Left cardiac atrium (tissue), 4 donors: ENCODE measurements at regions of chr11 and their contacts with region 1.

Region 1: DNA sequence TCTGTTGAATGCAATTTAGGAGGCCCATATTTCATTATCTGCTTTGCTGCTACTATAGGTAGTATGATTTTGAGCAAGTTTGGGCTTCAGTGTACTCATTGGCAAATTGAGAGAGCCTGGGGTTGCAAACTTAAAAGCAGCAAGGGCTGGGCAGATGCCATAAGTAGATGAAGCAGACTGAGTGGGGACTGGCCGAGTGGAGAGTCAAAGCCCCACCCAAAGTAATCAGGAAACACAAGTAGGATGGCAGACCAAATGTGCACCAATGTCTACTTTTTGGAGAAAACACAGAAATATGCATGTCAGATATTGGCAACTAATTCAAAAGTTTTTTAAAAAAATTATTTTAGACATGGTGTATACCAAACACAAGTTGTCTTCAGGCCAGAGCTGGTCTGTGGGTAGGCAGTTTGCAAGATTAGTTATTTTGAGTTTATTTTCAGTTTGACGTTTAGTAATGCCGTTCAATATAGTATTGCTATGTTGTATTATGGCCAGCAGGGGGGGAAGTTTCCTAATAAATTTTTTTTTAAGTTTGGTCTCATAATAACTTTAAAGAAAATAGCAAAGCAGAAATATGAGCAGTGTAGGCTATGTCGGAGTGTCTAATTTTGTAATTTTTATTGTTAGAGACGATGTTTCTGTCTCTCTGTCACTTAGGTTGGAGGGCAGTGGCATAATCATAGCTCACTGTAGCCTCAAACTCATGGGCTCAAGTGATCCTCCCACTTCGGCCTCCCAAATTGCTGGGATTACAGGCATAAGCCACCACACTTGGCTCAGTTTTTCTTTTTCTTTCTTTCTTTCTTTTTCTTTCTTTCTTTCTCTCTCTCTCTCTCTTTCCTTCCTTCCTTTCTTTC is 105.1 kb downstream of the HIPK3 start:
- DNase-seq: no peak
- ATAC-seq: peak; percentile 44 to 60

Region 2: GRCh38 chr11:33135768-33136443 is 226.4 kb before region 1 on chr11:
- intact Hi-C with region 1: no loop called
- DNase-seq: no peak
- ATAC-seq: no peak

Region 3: DNA sequence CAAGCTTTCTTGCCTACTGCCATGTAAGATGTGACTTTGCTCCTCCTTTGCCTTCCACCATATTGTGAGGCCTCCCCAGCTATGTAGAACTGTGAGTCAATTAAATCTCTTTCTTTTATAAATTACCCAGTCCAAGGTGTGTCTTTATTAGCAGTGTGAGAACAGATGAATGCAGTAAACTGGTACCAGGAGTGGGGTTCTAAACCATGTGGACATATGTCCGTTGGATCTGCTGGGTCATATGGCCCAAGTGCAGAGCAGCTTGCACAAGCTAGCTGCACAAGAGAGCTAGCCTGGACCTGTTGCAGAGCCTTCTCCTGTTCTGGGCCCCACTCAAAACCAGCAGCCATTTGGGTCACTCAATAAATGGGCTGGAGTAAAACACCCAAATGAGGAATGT is 72.0 kb after region 1 on chr11:
- intact Hi-C with region 1: no loop called
- DNase-seq: no peak
- ATAC-seq: no peak

Region 4: DNA sequence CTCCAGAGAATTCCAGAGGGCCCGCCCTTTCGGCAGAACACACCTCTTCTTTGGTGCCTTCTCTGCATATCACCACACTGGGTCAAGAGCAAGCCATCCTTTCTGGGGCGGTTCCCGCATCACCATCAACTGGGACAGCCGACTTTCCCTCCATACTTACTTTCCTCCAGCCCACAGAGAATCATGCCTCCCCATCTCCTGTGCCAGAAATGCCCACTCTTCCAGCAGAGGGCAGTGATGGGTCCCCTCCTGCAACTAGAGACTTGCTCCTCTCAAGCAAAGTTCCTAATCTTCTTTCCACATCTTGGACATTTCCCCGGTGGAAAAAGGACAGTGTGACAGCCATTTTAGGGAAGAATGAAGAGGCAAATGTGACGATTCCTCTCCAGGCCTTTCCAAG is 180.6 kb after region 1 on chr11:
- intact Hi-C with region 1: loop called in 1 of 2 experiments (anchors 10 kb)
- DNase-seq: peak; percentile 46
- ATAC-seq: peak in 1 of 2 donors; percentile 54

Region 5: GRCh38 chr11:33742249-33742851 is 380.1 kb after region 1 on chr11:
- intact Hi-C with region 1: loop called in 1 of 2 experiments (anchors 2 kb)
- DNase-seq: no peak
- ATAC-seq: peak; percentile 41 to 62

Region 6: DNA sequence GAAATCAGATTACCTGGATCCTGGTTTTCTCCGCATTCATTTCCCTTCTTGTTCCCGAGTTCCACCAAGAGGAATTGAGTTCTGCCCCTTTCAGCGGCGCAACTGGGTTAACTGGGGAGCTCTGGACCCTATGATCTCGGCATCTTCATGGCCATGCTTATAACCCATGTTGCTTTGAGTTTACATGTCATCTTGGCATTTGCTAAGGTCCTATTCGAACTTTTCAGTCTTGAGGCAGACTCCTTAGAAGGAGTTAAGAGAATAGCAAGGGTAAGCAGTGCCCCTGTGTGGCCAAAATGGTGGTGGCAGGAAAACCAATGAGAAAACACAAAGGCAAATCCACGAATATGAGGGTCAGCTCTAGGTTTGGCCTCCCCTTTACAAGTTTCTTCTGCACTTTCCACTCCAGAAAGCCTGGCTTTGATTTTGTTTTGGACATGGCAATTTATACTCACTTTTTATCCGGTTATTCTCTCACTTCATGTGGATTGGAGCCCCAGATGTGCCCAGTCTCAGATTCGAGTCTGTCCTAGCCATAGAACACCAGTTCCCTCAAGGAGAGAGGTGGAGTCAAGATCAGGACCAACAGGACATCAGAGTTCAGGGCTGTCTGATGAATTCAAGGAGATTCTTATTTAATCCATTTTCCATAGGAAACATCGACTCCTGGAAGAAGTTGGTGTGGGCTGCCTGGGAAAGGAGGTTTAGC is 467.3 kb after region 1 on chr11:
- intact Hi-C with region 1: loop called in 1 of 2 experiments (anchors 2 kb)
- DNase-seq: peak; percentile 43
- ATAC-seq: peak; percentile 91 to 93